ENCODE measurements at regions of chr7 and their contacts with region 1.

Region 1: GRCh38 chr7:100029596-100029995 is 14.2 kb downstream of the ZKSCAN1 start:
- DNase-seq: no peak
- ATAC-seq: no peak
- H3K4me3 Mint-ChIP-seq: no peak overlapping the region
- H3K27ac Mint-ChIP-seq: no peak overlapping the region
- H3K4me1 Mint-ChIP-seq: no peaks in the 10 kb centered on the region
- H3K27me3 Mint-ChIP-seq: no peaks in the 10 kb centered on the region

Region 2: GRCh38 chr7:100015232-100016209 is 14.1 kb before region 1 on chr7 and contains the start of gene ZKSCAN1:
- CTCF ChIA-PET with region 1: interaction called, 10 read pairs
- POLR2A ChIA-PET with region 1: interaction called, 19 read pairs
- DNase-seq: peak; percentile 90
- ATAC-seq: peak; percentile 98
- H3K4me3 Mint-ChIP-seq: peak within 1 kb of the TSS; percentile 92
- H3K27ac Mint-ChIP-seq: peak within 1 kb of the TSS; percentile 95
- H3K4me1 Mint-ChIP-seq: peaks cover 50% of the 10 kb centered on the region
- H3K27me3 Mint-ChIP-seq: no peaks in the 10 kb centered on the region
- total RNA-seq, gene ZKSCAN1: 50.4 to 54.5 TPM

Measured in activated CD8-positive, alpha-beta T cell treated with anti-CD3 and anti-CD28 coated beads, Interleukin-2, amount 10 ng/mL, durations not matched to agents 7 days and 5 days (primary cell).